Activated CD4-positive, alpha-beta T cell treated with anti-CD3 and anti-CD28 coated beads for 36 hours (primary cell): ENCODE measurements at regions of chr5 and their contacts with region 1.

Region 1: GRCh38 chr5:149268928-149269557 is 2.6 kb upstream of the AFAP1L1 start:
- DNase-seq: no peak
- ATAC-seq: peak; percentile 45
- H3K4me3 Mint-ChIP-seq: no peak overlapping the region
- H3K27ac Mint-ChIP-seq: no peak overlapping the region
- H3K4me1 Mint-ChIP-seq: peaks cover 13% of the 10 kb centered on the region
- H3K27me3 Mint-ChIP-seq: peaks cover 23% of the 10 kb centered on the region

Region 2: DNA sequence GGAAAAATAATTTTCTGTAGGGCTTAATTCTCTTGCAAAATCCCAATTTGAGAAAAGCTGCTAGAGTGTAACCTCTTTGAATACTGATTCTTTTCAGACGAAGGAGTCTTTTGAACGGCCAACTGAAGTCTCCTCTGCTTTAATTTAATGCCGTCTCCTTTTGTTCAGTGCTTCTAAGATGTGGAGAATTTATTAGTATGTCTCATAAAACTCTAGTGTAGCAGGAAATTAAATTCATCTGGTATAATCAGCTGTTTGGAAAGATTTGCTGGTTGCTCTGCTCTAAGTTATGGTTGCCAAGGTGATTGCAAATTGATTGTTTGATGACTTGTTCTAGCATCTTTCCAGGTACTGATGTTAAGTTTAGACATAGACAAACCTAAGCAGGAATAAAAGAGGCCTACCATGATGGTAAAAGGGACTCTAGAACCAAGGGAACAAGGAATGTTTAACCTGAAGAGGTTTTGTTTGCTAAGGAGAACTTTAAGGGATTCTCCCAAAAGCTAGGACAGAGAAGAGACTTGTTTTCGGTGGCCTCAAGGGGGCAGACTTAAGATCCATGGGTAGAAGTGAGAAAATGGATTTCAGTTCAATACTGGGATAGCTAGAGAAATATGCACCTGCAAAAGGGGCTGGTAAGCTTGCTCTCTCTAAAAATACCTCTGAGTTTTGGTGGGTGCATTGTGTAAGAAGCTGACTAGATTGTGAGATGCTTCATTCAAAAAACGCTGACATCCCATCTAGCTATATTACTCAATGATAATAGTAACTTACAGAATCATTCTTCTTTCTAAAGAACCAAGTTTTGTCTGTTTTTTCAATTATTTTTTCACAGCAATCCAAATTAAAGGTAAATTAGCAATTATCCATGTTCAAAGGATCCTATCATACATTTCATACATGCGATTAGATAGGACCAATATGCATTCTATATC is 448.3 kb before region 1 on chr5:
- CTCF ChIA-PET with region 1: no interaction called
- POLR2A ChIA-PET with region 1: no interaction called
- intact Hi-C with region 1: loop called in 1 of 2 experiments (anchors 5 kb)
- DNase-seq: peak; percentile 32
- ATAC-seq: peak; percentile 30
- H3K4me3 Mint-ChIP-seq: no peak overlapping the region
- H3K27ac Mint-ChIP-seq: no peak overlapping the region
- H3K4me1 Mint-ChIP-seq: peaks cover 3% of the 10 kb centered on the region
- H3K27me3 Mint-ChIP-seq: peaks cover 15% of the 10 kb centered on the region

Region 3: GRCh38 chr5:149125386-149125891 is 143.6 kb before region 1 on chr5:
- CTCF ChIA-PET with region 1: interaction called, 20 read pairs
- POLR2A ChIA-PET with region 1: no interaction called
- intact Hi-C with region 1: no loop called
- DNase-seq: no peak
- ATAC-seq: no peak
- H3K4me3 Mint-ChIP-seq: no peak overlapping the region
- H3K27ac Mint-ChIP-seq: no peak overlapping the region
- H3K4me1 Mint-ChIP-seq: no peaks in the 10 kb centered on the region
- H3K27me3 Mint-ChIP-seq: peaks cover 12% of the 10 kb centered on the region

Region 4: DNA sequence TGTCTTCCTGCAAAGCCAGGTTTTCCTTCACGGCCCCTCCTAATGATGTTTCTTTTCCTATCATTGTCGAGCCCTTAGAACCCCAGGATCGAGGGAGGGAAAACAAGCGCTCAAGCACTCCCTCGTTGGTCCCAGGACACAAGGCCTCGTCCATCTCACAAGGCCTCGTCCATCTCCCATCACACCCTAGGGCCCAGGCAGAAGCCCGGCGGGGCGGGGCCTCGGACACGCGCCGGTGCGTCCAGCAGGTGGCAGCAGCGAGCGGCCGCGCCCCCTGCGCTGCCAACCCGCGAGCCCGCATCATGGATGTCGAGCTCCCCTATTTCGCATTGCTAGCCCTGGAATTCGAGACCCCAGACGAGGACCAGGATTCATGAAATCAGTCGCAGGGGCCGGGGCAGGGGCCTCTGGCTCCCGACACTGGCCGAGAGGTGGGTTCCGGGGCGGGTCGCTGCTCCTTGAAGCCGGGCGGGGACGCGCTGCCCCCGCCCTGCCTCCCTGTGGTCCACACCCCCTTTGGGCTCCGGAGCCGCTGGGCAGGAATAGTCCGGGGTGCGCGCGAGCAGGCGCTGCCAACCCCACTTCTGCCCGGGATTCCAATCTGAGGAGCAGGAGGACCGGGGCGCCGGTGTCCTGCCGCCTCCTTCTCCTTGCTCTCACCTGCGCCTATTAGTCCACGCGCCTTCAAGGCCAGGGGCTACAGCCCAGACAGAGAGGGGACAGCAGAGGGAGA is 127.7 kb before region 1 on chr5 and contains the start of gene ABLIM3:
- CTCF ChIA-PET with region 1: interaction called, 53 read pairs
- POLR2A ChIA-PET with region 1: no interaction called
- intact Hi-C with region 1: loop called (anchors 1 kb)
- DNase-seq: peak; percentile 83
- ATAC-seq: peak; percentile 96
- H3K4me3 Mint-ChIP-seq: peak within 1 kb of the TSS; percentile 29
- H3K27ac Mint-ChIP-seq: no peak within 1 kb of the TSS
- H3K4me1 Mint-ChIP-seq: no peaks in the 10 kb centered on the region
- H3K27me3 Mint-ChIP-seq: peaks cover 5% of the 10 kb centered on the region
- total RNA-seq, gene ABLIM3: 0.07 TPM in 1 of 2 experiments, not detected in the other